Thyroid gland (tissue), 4 donors: ENCODE measurements at regions of chr14 and their contacts with region 1.

Region 1: GRCh38 chr14:61456720-61457119 is 135.3 kb downstream of the PRKCH start:
- DNase-seq: peak; percentile 84 to 87
- H3K4me3 ChIP-seq: no peak overlapping the region
- H3K27ac ChIP-seq: no peak overlapping the region
- H3K4me1 ChIP-seq: no peaks in the 10 kb centered on the region
- H3K27me3 ChIP-seq: no peaks in the 10 kb centered on the region
- CTCF ChIP-seq: peak; percentile 61 to 91 (median 79)
- POLR2A ChIP-seq: no peak

Region 2: GRCh38 chr14:61296719-61297502 is 159.8 kb before region 1 on chr14:
- intact Hi-C with region 1: loop called (anchors 5 kb)
- DNase-seq: no peak
- H3K4me3 ChIP-seq: no peak overlapping the region
- H3K27ac ChIP-seq: peak overlapping the region in 1 of 3 donors; percentile 5
- H3K4me1 ChIP-seq: no peaks in the 10 kb centered on the region
- H3K27me3 ChIP-seq: no peaks in the 10 kb centered on the region
- CTCF ChIP-seq: peak in 5 of 6 experiments; percentile 41 to 72 (median 64)
- POLR2A ChIP-seq: no peak

Region 3: DNA sequence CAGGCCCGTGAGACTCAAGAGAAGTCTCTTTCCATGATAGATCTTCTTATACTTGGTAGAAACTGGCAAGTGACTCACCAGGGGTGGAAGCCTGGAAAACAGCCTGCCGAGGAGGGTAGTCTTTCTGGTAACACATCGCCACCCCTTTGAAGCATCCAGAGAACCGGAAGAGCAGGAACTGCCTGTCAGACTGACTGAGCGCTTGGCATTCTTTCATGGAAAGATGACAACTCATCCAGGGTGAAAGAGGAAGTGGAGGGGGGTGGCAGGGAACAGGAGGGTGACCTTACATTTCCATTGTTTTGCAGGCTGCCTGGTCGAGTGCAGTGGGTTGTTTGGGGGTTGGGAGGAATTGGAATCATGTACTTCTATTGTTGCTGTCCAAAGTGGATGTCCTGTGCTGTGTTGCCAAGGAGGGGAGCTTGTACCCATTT is 100.8 kb before region 1 on chr14:
- intact Hi-C with region 1: no loop called
- DNase-seq: peak; percentile 68 to 76
- H3K4me3 ChIP-seq: no peak overlapping the region
- H3K27ac ChIP-seq: peak overlapping the region; percentile 15 to 48 (median 46)
- H3K4me1 ChIP-seq: peaks cover 9 to 14% of the 10 kb centered on the region in 2 donors
- H3K27me3 ChIP-seq: no peaks in the 10 kb centered on the region
- CTCF ChIP-seq: no peak
- POLR2A ChIP-seq: no peak

Region 4: DNA sequence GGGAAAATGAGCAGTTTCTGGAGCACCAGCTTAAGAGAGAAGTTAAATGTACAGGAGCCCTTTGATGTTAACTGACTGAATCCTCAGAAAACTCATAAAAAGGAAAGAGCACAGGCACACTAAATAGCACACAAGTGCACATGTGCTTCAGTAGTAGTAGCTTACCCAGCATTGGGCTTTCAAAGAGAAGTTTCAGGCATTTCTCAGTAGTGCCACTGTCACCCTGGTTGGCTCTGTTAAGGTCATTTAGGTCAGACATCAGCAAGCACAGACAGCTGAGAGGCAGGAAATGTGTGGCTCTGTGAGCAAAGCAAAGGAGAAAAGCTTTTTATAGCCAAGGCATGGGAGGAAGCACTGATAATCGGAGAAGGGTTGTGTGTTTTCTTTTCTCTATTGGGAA is 142.3 kb after region 1 on chr14:
- intact Hi-C with region 1: no loop called
- DNase-seq: no peak
- H3K4me3 ChIP-seq: no peak overlapping the region
- H3K27ac ChIP-seq: peak overlapping the region in 2 of 3 donors; percentile 27 to 59
- H3K4me1 ChIP-seq: peaks cover 11 to 18% of the 10 kb centered on the region in 2 donors
- H3K27me3 ChIP-seq: no peaks in the 10 kb centered on the region
- CTCF ChIP-seq: no peak
- POLR2A ChIP-seq: no peak

Region 5: GRCh38 chr14:61662437-61663311 is 206.0 kb after region 1 on chr14:
- intact Hi-C with region 1: no loop called
- DNase-seq: peak; percentile 31 to 36
- H3K4me3 ChIP-seq: no peak overlapping the region
- H3K27ac ChIP-seq: peak overlapping the region in 1 of 3 donors; percentile 42
- H3K4me1 ChIP-seq: peaks cover 0 to 21% of the 10 kb centered on the region in 2 donors
- H3K27me3 ChIP-seq: no peaks in the 10 kb centered on the region
- CTCF ChIP-seq: no peak
- POLR2A ChIP-seq: no peak

Region 6: DNA sequence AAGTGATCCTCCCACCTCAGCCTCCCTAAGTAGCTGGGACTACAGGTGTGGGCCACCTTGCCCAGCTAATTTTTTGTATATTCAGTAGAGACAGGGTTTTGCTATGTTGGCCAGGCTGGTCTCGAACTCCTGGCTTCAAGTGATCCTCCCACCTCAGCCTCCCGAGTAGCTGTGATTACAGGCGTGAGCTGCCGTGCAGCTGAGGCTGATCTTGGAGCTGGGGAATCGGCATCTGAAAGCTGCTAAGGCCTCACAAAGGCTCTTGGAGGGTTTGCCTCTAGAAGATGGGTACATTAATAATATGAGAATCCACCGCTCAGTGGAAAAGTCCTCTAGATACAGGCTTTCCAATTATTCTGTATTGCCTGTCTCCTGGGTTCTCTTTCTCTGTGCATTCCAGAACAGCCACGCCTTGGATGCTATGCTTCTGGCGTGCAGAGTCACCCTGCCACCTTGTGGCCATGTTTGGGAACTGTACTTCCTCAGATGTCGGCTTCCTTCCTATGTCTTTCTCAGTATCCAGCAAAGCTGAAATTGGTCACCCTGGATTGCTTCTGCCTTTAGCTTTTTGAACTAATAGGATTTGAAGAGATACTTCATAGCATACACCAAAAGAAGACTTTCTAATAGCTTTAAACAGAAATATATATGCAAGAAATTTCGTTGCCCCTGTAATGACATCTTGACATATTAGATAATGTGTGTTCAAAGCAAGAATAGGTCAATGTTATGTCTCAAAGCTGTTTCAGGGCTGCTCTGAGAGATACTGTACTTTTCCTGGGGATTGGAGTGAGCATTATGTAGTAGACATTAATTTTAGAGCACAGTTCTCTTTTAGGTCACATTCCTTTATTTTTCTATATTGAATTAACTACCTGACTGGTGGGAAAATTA is 380.9 kb after region 1 on chr14:
- intact Hi-C with region 1: loop called (anchors 2 kb)
- DNase-seq: peak; percentile 79
- H3K4me3 ChIP-seq: no peak overlapping the region
- H3K27ac ChIP-seq: no peak overlapping the region
- H3K4me1 ChIP-seq: no peaks in the 10 kb centered on the region
- H3K27me3 ChIP-seq: no peaks in the 10 kb centered on the region
- CTCF ChIP-seq: peak; percentile 88 to 93 (median 92)
- POLR2A ChIP-seq: no peak